Posterior vena cava (tissue), 2 donors: ENCODE measurements at regions of chr11 and their contacts with region 1.

Region 1: GRCh38 chr11:131370090-131370751 is at the start of gene NTM:
- DNase-seq: no peak
- total RNA-seq, gene NTM: 8.2 to 16.1 TPM

Region 2: DNA sequence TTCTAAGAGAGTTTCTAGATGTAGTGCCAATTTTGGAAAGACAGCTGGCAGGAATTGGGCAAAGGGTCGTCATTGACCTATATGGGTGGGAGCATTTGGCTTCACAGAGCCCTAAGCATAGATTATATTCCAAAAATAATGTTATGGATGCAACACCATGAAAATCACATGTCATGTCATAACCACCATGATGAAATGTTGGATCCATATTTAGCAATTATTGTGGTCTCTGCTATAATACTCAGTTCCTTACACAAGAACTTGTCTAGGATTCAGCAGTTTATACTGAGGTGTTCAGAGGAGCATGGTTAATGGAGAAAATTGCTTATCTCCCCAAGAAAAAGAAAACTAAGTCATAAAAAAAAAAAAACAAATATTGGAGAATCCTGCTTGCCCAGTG is 31.8 kb after region 1 on chr11:
- intact Hi-C with region 1: loop called in 1 of 2 experiments (anchors 1 kb)
- DNase-seq: no peak